ENCODE measurements at regions of chr12 and their contacts with region 1.

Region 1: GRCh38 chr12:12032851-12033588 is 37.7 kb upstream of the BCL2L14 start:
- DNase-seq: peak; percentile 78
- ATAC-seq: peak; percentile 73
- H3K4me3 Mint-ChIP-seq: peak overlapping the region; percentile 60
- H3K27ac Mint-ChIP-seq: peak overlapping the region; percentile 91
- H3K4me1 Mint-ChIP-seq: peaks cover 46% of the 10 kb centered on the region
- H3K27me3 Mint-ChIP-seq: no peaks in the 10 kb centered on the region

Region 2: GRCh38 chr12:11581179-11581755 is 451.8 kb before region 1 on chr12:
- CTCF ChIA-PET with region 1: interaction called, 111 read pairs
- POLR2A ChIA-PET with region 1: interaction called, 4 read pairs
- intact Hi-C with region 1: loop called (anchors 1 kb)
- DNase-seq: peak; percentile 83
- ATAC-seq: no peak
- H3K4me3 Mint-ChIP-seq: no peak overlapping the region
- H3K27ac Mint-ChIP-seq: no peak overlapping the region
- H3K4me1 Mint-ChIP-seq: peaks cover 19% of the 10 kb centered on the region
- H3K27me3 Mint-ChIP-seq: peaks cover 5% of the 10 kb centered on the region

Region 3: GRCh38 chr12:11765817-11766794 is 266.9 kb before region 1 on chr12:
- CTCF ChIA-PET with region 1: interaction called, 8 read pairs
- POLR2A ChIA-PET with region 1: no interaction called
- intact Hi-C with region 1: loop called (anchors 2 to 5 kb)
- DNase-seq: peak; percentile 90
- ATAC-seq: peak; percentile 89
- H3K4me3 Mint-ChIP-seq: peak overlapping the region; percentile 32
- H3K27ac Mint-ChIP-seq: peak overlapping the region; percentile 84
- H3K4me1 Mint-ChIP-seq: peaks cover 100% of the 10 kb centered on the region
- H3K27me3 Mint-ChIP-seq: no peaks in the 10 kb centered on the region

Region 4: GRCh38 chr12:11812586-11813427 is 220.2 kb before region 1 on chr12:
- CTCF ChIA-PET with region 1: interaction called, 10 read pairs
- POLR2A ChIA-PET with region 1: no interaction called
- intact Hi-C with region 1: no loop called
- DNase-seq: peak; percentile 42
- ATAC-seq: peak; percentile 49
- H3K4me3 Mint-ChIP-seq: peak overlapping the region; percentile 46
- H3K27ac Mint-ChIP-seq: peak overlapping the region; percentile 72
- H3K4me1 Mint-ChIP-seq: peaks cover 60% of the 10 kb centered on the region
- H3K27me3 Mint-ChIP-seq: no peaks in the 10 kb centered on the region

Region 5: GRCh38 chr12:11877869-11878780 is 154.9 kb before region 1 on chr12:
- CTCF ChIA-PET with region 1: interaction called, 7 read pairs
- POLR2A ChIA-PET with region 1: no interaction called
- intact Hi-C with region 1: loop called in 1 of 2 experiments (anchors 5 kb)
- DNase-seq: peak; percentile 32
- ATAC-seq: peak; percentile 28
- H3K4me3 Mint-ChIP-seq: no peak overlapping the region
- H3K27ac Mint-ChIP-seq: peak overlapping the region; percentile 73
- H3K4me1 Mint-ChIP-seq: peaks cover 52% of the 10 kb centered on the region
- H3K27me3 Mint-ChIP-seq: no peaks in the 10 kb centered on the region

Region 6: GRCh38 chr12:11981121-11981733 is 51.8 kb before region 1 on chr12:
- CTCF ChIA-PET with region 1: interaction called, 32 read pairs
- POLR2A ChIA-PET with region 1: interaction called, 5 read pairs
- intact Hi-C with region 1: loop called in 1 of 2 experiments (anchors 2 kb)
- DNase-seq: peak; percentile 70
- ATAC-seq: peak; percentile 87
- H3K4me3 Mint-ChIP-seq: peak overlapping the region; percentile 26
- H3K27ac Mint-ChIP-seq: peak overlapping the region; percentile 99
- H3K4me1 Mint-ChIP-seq: peaks cover 58% of the 10 kb centered on the region
- H3K27me3 Mint-ChIP-seq: no peaks in the 10 kb centered on the region

Measured in activated CD4-positive, alpha-beta T cell treated with anti-CD3 and anti-CD28 coated beads for 36 hours (primary cell).